ENCODE measurements at regions of chr1 and their contacts with region 1.

Region 1: GRCh38 chr1:11571906-11572616 is 82.2 kb downstream of the FBXO2 start:
- DNase-seq: peak; percentile 81
- ATAC-seq: peak; percentile 94
- H3K4me3 Mint-ChIP-seq: no peak overlapping the region
- H3K27ac Mint-ChIP-seq: no peak overlapping the region
- H3K4me1 Mint-ChIP-seq: peaks cover 9% of the 10 kb centered on the region
- H3K27me3 Mint-ChIP-seq: no peaks in the 10 kb centered on the region
- CTCF ChIP-seq: 0 out of 2 replicates have a peak, but pooled peaks have one; percentile 31

Region 2: DNA sequence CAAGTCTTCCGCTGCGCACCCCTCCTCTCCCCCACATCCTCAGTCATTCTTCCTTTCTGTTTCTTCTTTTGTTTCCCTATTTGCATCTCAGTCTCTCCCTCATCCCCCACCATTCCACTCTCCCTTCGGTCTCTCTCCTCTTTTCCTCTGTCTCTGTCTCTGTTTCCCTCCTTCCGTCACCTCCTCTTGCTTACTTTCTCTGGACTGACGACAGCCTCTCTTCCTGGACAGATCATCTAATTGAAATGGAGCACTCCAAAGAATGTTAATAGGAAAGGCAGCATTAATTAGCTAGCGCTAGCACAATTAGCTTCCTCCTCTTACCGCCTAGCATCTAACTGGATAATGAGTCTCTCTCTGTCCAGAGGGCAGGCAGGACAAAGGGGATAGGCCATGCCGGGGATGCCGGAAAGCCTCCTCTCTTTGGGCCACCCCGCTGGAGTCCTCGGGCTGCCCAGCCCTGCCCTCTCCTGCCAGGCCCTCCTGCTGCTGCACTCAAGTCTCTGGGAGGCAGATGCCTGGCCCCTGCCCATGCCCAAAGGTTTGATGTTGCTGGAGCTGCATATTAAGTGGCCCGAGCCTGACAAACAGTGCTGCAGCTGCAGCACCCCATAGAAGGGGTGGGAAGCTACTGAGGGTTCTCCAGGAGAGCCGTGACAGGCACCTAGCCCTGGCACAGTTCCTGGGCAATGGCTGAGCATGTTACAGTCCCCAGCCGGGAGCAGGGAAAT is 72.3 kb before region 1 on chr1:
- CTCF ChIA-PET with region 1: interaction called, 19 read pairs
- POLR2A ChIA-PET with region 1: no interaction called
- DNase-seq: peak; percentile 27
- ATAC-seq: peak; percentile 74
- H3K4me3 Mint-ChIP-seq: peak overlapping the region; percentile 43
- H3K27ac Mint-ChIP-seq: peak overlapping the region; percentile 88
- H3K4me1 Mint-ChIP-seq: peaks cover 35% of the 10 kb centered on the region
- H3K27me3 Mint-ChIP-seq: no peaks in the 10 kb centered on the region
- CTCF ChIP-seq: no peak

Region 3: GRCh38 chr1:11594222-11594621 is 22.2 kb after region 1 on chr1:
- CTCF ChIA-PET with region 1: interaction called, 52 read pairs
- POLR2A ChIA-PET with region 1: no interaction called
- DNase-seq: peak; percentile 53
- ATAC-seq: peak; percentile 77
- H3K4me3 Mint-ChIP-seq: no peak overlapping the region
- H3K27ac Mint-ChIP-seq: no peak overlapping the region
- H3K4me1 Mint-ChIP-seq: peaks cover 23% of the 10 kb centered on the region
- H3K27me3 Mint-ChIP-seq: no peaks in the 10 kb centered on the region
- CTCF ChIP-seq: no peak

Region 4: GRCh38 chr1:11611638-11612327 is 39.7 kb after region 1 on chr1:
- CTCF ChIA-PET with region 1: interaction called, 23 read pairs
- POLR2A ChIA-PET with region 1: no interaction called
- DNase-seq: no peak
- ATAC-seq: peak; percentile 75
- H3K4me3 Mint-ChIP-seq: no peak overlapping the region
- H3K27ac Mint-ChIP-seq: no peak overlapping the region
- H3K4me1 Mint-ChIP-seq: no peaks in the 10 kb centered on the region
- H3K27me3 Mint-ChIP-seq: peaks cover 2% of the 10 kb centered on the region
- CTCF ChIP-seq: no peak

Region 5: GRCh38 chr1:11654137-11654938 is 82.3 kb after region 1 on chr1 and contains the starts of genes FBXO2 and FBXO44:
- CTCF ChIA-PET with region 1: interaction called, 10 read pairs
- POLR2A ChIA-PET with region 1: no interaction called
- DNase-seq: peak; percentile 88
- ATAC-seq: peak; percentile 69
- H3K4me3 Mint-ChIP-seq: peak within 1 kb of the TSS; percentile 74
- H3K27ac Mint-ChIP-seq: no peak within 1 kb of the TSS
- H3K4me1 Mint-ChIP-seq: peaks cover 33% of the 10 kb centered on the region
- H3K27me3 Mint-ChIP-seq: peaks cover 22% of the 10 kb centered on the region
- CTCF ChIP-seq: no peak
- total RNA-seq, gene FBXO2: 58.2 to 68.2 TPM (median 63.7 TPM) in 3 replicates
- total RNA-seq, gene FBXO44: 34.9 to 45.6 TPM (median 40.6 TPM) in 3 replicates

Measured in WTC11 (cell line).